HepG2 (cell line): ENCODE measurements at regions of chr16 and their contacts with region 1.

Region 1: GRCh38 chr16:67561824-67562525 is 351 bp upstream of the CTCF start:
- DNase-seq: peak; percentile 97
- ATAC-seq: peak; percentile 92
- H3K4me3 ChIP-seq: peak overlapping the region; percentile 90 to 99 (median 95)
- H3K27ac ChIP-seq: peak overlapping the region; percentile 99
- H3K4me1 ChIP-seq: peaks cover 40% of the 10 kb centered on the region
- H3K27me3 ChIP-seq: no peaks in the 10 kb centered on the region; a peak in 1 of 5 replicates
- CTCF ChIP-seq: peak; percentile 13; the same call in 1 of the 2 replicates
- EP300 ChIP-seq: no peak; a peak in 2 of 4 replicates
- POLR2A ChIP-seq: peak; percentile 70 to 88
- RAD21 ChIP-seq: 0 out of 2 replicates have a peak, but pooled peaks have one; percentile 16

Region 2: GRCh38 chr16:67393035-67393787 is 168.8 kb before region 1 on chr16 and contains the start of gene TPPP3:
- CTCF ChIA-PET with region 1: no interaction called
- POLR2A ChIA-PET with region 1: no interaction called
- in situ Hi-C with region 1: no loop called
- intact Hi-C with region 1: no loop called
- DNase-seq: peak; percentile 77
- ATAC-seq: peak; percentile 74
- H3K4me3 ChIP-seq: peak within 1 kb of the TSS; percentile 9 to 73 (median 31); a peak in 4 of 6 replicates
- H3K27ac ChIP-seq: no peak within 1 kb of the TSS
- H3K4me1 ChIP-seq: peaks cover 44% of the 10 kb centered on the region
- H3K27me3 ChIP-seq: peaks cover 6 to 65% of the 10 kb centered on the region in 2 experiments; a peak in 4 of 5 replicates
- CTCF ChIP-seq: peak; percentile 79
- EP300 ChIP-seq: peak in 1 of 2 experiments; percentile 42; a peak in 1 of 4 replicates
- POLR2A ChIP-seq: peak in 1 of 2 experiments; percentile 24; a peak in 1 of 4 replicates
- RAD21 ChIP-seq: peak; percentile 80
- total RNA-seq, gene TPPP3: 0.20 and 0.44 TPM in 2 replicates

Region 3: DNA sequence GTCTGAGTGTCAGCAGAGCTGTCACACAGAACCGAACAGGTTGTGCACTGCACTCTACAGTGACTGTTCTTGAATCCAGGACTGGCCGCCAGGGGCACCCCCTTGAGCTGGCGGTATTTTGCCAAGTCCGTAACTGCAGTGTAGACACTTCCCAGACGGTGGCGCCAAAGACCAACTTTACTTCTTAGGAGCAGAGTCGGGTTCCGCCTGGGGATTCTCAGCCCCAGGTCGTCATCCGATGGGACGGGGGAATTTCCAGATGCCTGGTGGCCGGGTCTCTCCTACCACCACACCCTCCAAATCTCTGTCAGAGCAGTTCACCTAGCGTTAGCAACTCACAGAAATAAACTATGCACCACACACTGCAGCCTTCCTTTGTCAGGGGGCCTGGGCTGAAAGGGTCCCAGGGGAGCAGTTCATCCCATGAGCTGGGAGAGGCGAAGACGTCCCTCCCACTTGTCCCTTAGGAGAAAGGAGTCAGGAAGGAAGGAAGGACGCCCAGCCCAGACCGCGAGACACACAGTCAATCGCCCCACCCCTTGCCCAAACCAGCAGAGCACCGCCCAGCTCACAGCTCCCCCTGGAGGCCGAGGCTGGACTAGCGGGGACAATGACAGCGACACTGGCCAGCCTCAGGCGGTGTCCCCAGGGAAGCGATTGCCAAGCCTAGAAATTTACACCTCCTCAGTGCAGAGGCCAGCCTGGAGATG is 40.7 kb before region 1 on chr16:
- CTCF ChIA-PET with region 1: interaction called, 33 read pairs
- POLR2A ChIA-PET with region 1: interaction called, 3 read pairs
- in situ Hi-C with region 1: no loop called
- intact Hi-C with region 1: loop called (anchors 1 kb)
- DNase-seq: peak; percentile 95
- ATAC-seq: peak; percentile 89
- H3K4me3 ChIP-seq: peak overlapping the region; percentile 63 to 84 (median 75)
- H3K27ac ChIP-seq: peak overlapping the region; percentile 37
- H3K4me1 ChIP-seq: peaks cover 54% of the 10 kb centered on the region
- H3K27me3 ChIP-seq: peaks cover 9 to 38% of the 10 kb centered on the region in 2 experiments; a peak in 4 of 5 replicates
- CTCF ChIP-seq: peak; percentile 88
- EP300 ChIP-seq: 0 out of 4 replicates have a peak, but pooled peaks of 1 of the 2 experiments have one; percentile 3
- POLR2A ChIP-seq: no peak
- RAD21 ChIP-seq: peak; percentile 94

Region 4: DNA sequence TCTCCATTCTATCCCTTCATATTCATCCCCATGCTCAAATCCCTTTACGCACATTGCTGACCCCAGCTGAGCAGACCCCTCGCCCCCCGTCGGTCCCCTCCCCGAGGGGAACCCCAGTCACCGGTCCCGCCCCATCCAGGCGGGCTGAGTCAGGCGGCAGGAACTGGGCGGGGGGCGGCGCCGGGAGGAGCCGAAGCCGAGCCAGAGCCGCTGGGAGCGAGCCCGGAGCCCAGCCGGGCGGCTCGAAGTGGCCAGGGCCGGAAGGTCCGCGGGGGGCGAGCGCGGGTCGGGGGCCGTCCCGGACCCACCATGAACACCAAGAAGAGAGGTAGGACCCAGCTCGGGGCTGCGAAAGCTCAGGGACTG is 24.7 kb before region 1 on chr16:
- CTCF ChIA-PET with region 1: no interaction called
- POLR2A ChIA-PET with region 1: interaction called, 18 read pairs
- in situ Hi-C with region 1: no loop called
- intact Hi-C with region 1: no loop called
- DNase-seq: no peak
- ATAC-seq: peak; percentile 28
- H3K4me3 ChIP-seq: peak overlapping the region; percentile 59 to 76 (median 69); a peak in 5 of 6 replicates
- H3K27ac ChIP-seq: no peak overlapping the region
- H3K4me1 ChIP-seq: peaks cover 25% of the 10 kb centered on the region
- H3K27me3 ChIP-seq: no peaks in the 10 kb centered on the region
- CTCF ChIP-seq: no peak; the same call in 1 of the 2 replicates
- EP300 ChIP-seq: no peak
- POLR2A ChIP-seq: no peak
- RAD21 ChIP-seq: no peak

Region 5: GRCh38 chr16:67641779-67642708 is 80.1 kb after region 1 on chr16:
- CTCF ChIA-PET with region 1: interaction called, 7 read pairs
- POLR2A ChIA-PET with region 1: no interaction called
- in situ Hi-C with region 1: no loop called
- intact Hi-C with region 1: loop called (anchors 5 kb)
- DNase-seq: no peak
- ATAC-seq: peak; percentile 4
- H3K4me3 ChIP-seq: no peak overlapping the region
- H3K27ac ChIP-seq: no peak overlapping the region
- H3K4me1 ChIP-seq: peaks cover 17% of the 10 kb centered on the region
- H3K27me3 ChIP-seq: peaks cover 8 to 22% of the 10 kb centered on the region in 2 experiments
- CTCF ChIP-seq: no peak
- EP300 ChIP-seq: no peak
- POLR2A ChIP-seq: no peak
- RAD21 ChIP-seq: no peak

Region 6: DNA sequence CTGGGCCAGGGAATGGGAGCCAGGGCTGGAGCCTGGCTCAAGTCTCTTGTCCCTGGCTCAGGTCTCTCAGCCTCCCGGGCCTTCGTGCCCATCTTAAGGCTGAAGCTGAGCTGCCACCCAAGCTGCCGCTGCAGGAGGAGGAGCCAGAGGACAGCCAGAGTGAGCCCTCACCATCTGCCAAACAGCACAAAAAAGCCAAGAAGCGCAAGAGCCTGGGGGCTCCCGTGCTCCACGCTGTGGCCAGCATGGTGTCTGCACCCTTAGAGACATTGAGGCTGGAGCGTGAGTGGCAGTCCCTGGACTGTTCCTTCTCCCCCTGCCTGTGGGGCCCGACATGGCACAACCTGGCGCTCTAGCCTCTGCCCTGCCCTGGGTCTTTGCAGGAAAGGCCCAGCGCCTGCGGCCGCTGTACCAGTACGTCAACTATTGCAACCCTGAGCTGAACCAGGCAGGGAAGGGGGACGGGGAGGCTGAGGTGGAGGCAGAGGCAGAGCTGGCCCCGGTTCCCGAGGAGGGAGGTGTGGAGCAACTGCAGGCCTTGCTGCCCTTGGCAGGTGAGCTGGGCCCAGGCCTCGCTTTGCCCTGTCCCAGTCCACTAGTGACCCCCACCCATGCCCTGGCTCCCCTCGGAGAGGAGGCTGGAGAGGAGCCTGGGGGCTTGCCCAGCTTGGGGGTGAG is 106.0 kb after region 1 on chr16:
- CTCF ChIA-PET with region 1: interaction called, 5 read pairs
- POLR2A ChIA-PET with region 1: interaction called, 28 read pairs
- in situ Hi-C with region 1: no loop called
- intact Hi-C with region 1: no loop called
- DNase-seq: peak; percentile 96
- ATAC-seq: peak; percentile 88
- H3K4me3 ChIP-seq: peak overlapping the region; percentile 77 to 96 (median 88)
- H3K27ac ChIP-seq: peak overlapping the region; percentile 21
- H3K4me1 ChIP-seq: peaks cover 39% of the 10 kb centered on the region
- H3K27me3 ChIP-seq: no peaks in the 10 kb centered on the region; a peak in 1 of 5 replicates
- CTCF ChIP-seq: peak; percentile 99
- EP300 ChIP-seq: no peak
- POLR2A ChIP-seq: peak in 1 of 2 experiments; percentile 24; a peak in 1 of 4 replicates
- RAD21 ChIP-seq: peak; percentile 98